H1 (cell line): ENCODE measurements at regions of chr18 and their contacts with region 1.

Region 1: DNA sequence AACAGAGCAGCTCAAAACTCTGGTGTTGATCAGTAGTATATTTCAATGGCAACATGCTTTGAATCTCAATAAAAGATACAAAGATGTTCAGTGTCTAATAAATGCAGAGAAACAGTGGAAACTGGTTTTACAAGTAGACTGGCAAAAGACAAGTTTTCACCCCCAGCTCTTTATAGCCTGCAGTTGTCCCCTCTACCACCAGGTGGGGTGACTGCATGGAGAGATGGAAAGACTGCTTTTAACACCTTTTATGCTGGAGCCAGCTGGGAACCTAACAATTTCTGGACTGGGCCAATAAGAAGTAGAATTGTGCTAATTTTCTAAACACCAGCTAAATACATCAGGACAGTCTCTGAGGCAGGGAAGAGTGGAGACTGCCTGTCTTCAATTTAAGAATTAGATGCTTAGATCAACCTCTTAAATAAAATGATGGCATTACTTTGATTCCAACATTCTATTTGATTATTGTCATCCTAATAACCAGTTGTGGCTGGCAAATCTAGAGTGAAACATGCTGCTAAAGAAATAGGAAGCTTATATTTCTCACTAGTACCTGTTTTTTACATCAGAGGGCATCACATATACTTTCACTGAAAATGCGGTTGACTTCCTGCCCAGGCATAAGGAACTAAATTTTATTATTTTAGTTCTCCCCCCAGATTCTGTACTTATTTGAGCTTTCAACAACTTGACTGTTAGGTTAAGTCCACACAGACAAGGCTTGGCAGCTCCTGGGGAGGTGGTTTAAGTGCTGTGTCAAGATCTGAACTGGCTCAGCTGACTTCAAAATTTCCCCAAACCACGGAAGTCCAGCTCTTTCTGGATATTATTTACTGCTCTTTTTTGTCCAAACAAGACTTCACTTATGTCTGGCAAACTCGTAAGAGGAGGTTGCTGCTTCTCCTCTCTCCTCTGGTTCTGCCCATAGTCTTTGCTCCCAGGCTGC is 140.5 kb downstream of the TPGS2 start:
- DNase-seq: peak in 1 of 2 experiments; percentile 86
- H3K4me3 ChIP-seq: no peak overlapping the region
- H3K27ac ChIP-seq: no peak overlapping the region
- H3K4me1 ChIP-seq: no peaks in the 10 kb centered on the region
- H3K27me3 ChIP-seq: no peaks in the 10 kb centered on the region
- CTCF ChIP-seq: peak; percentile 56 to 89 (median 87)
- EP300 ChIP-seq: no peak
- POLR2A ChIP-seq: no peak
- RAD21 ChIP-seq: peak; percentile 76 to 80

Region 2: GRCh38 chr18:36650906-36651305 is 37.4 kb before region 1 on chr18:
- CTCF ChIA-PET with region 1: interaction called, 15 read pairs
- POLR2A ChIA-PET with region 1: no interaction called
- DNase-seq: no peak
- H3K4me3 ChIP-seq: no peak overlapping the region
- H3K27ac ChIP-seq: no peak overlapping the region
- H3K4me1 ChIP-seq: peaks cover 0 to 4% (median 0%) of the 10 kb centered on the region in 4 experiments; a peak in 1 of 7 replicates
- H3K27me3 ChIP-seq: no peaks in the 10 kb centered on the region
- CTCF ChIP-seq: no peak
- EP300 ChIP-seq: no peak
- POLR2A ChIP-seq: no peak
- RAD21 ChIP-seq: no peak

Region 3: DNA sequence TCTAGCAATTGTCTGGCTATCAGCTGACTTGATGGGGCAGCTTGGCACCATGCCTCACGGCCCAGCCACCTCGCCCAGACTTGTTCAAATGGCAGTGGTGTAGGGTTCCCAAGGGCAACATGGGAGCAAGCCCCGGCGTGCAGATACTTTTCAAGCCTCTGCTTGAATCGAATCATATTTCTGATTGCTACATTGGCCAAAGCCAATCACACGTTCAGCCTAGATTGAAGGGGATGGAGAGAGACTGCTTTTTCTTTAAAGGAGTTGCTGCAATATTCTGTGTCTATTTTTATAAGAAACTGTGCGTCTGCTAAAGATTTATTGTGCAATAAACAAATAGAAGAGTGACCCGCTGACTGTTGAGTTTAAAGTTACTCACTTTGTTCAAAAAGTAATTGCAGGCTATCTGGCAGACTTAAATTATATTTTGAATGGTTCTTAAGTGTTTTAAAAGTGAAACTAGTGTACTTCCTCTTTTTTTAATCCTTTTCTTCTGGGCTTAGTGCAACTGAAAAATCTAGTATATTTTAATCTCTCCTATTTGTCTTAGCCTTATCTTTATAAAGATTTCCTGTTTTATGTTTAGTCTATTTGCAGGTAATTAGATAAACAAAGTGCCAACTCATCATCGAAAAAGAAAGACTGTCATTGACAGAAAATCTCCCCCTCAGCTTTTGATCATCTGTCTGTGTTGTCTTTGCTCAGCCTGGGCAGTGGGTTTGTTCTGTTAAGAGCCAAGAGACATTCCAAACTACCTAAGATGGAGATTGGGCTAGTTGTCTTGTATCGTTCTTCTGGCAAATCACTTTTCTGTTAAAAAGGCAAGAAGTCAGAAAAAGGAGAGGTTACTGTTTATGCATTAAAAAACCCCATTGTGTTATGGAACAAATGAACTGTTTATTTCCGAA is 15.6 kb before region 1 on chr18:
- CTCF ChIA-PET with region 1: interaction called, 46 read pairs
- POLR2A ChIA-PET with region 1: no interaction called
- DNase-seq: no peak
- H3K4me3 ChIP-seq: no peak overlapping the region
- H3K27ac ChIP-seq: no peak overlapping the region
- H3K4me1 ChIP-seq: peaks cover 0 to 2% (median under 1%) of the 10 kb centered on the region in 4 experiments; a peak in 3 of 7 replicates
- H3K27me3 ChIP-seq: no peaks in the 10 kb centered on the region
- CTCF ChIP-seq: no peak
- EP300 ChIP-seq: no peak
- POLR2A ChIP-seq: no peak
- RAD21 ChIP-seq: no peak

Region 4: GRCh38 chr18:36711813-36712444 is 23.6 kb after region 1 on chr18:
- CTCF ChIA-PET with region 1: interaction called, 19 read pairs
- POLR2A ChIA-PET with region 1: no interaction called
- DNase-seq: no peak
- H3K4me3 ChIP-seq: no peak overlapping the region
- H3K27ac ChIP-seq: no peak overlapping the region
- H3K4me1 ChIP-seq: no peaks in the 10 kb centered on the region
- H3K27me3 ChIP-seq: no peaks in the 10 kb centered on the region; a peak in 2 of 7 replicates
- CTCF ChIP-seq: no peak
- EP300 ChIP-seq: no peak
- POLR2A ChIP-seq: no peak
- RAD21 ChIP-seq: no peak

Region 5: GRCh38 chr18:36718705-36719328 is 30.5 kb after region 1 on chr18:
- CTCF ChIA-PET with region 1: interaction called, 26 read pairs
- POLR2A ChIA-PET with region 1: no interaction called
- DNase-seq: no peak
- H3K4me3 ChIP-seq: no peak overlapping the region
- H3K27ac ChIP-seq: no peak overlapping the region
- H3K4me1 ChIP-seq: peaks cover 0 to 2% (median under 1%) of the 10 kb centered on the region in 4 experiments; a peak in 2 of 7 replicates
- H3K27me3 ChIP-seq: no peaks in the 10 kb centered on the region; a peak in 2 of 7 replicates
- CTCF ChIP-seq: no peak
- EP300 ChIP-seq: no peak
- POLR2A ChIP-seq: no peak
- RAD21 ChIP-seq: no peak

Region 6: DNA sequence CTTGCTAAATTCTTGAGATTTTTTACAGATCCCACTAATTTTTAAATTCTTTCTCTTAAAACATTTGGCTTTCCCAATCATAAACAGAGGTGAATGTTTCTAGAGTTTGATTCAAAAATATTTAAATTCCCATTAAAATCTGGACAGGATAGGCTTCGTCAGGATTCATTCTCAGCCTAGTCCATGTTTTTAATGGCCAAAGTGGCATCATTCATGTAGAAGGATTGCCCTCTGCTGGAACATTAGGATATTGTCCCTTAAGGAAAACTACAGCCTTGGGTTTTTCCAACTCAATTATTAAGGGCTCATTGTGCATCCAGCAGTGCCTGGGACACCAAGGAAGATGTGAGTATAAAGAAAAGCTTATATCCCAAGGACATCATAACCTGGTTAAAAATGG is 68.8 kb after region 1 on chr18:
- CTCF ChIA-PET with region 1: interaction called, 39 read pairs
- POLR2A ChIA-PET with region 1: no interaction called
- DNase-seq: no peak
- H3K4me3 ChIP-seq: no peak overlapping the region
- H3K27ac ChIP-seq: no peak overlapping the region
- H3K4me1 ChIP-seq: peaks cover 0 to 3% (median under 1%) of the 10 kb centered on the region in 4 experiments; a peak in 1 of 7 replicates
- H3K27me3 ChIP-seq: no peaks in the 10 kb centered on the region
- CTCF ChIP-seq: peak in 2 of 3 experiments; percentile 74 to 75; a peak in 3 of 4 replicates
- EP300 ChIP-seq: no peak
- POLR2A ChIP-seq: no peak
- RAD21 ChIP-seq: peak; percentile 90 to 92